ENCODE measurements at regions of chr12 and their contacts with region 1.

Region 1: GRCh38 chr12:46124848-46125619 is 134.7 kb upstream of the SCAF11 start:
- DNase-seq: peak; percentile 70
- H3K4me3 Mint-ChIP-seq: peak overlapping the region; percentile 10
- H3K27ac Mint-ChIP-seq: no peak overlapping the region
- H3K4me1 Mint-ChIP-seq: no peaks in the 10 kb centered on the region
- H3K27me3 Mint-ChIP-seq: no peaks in the 10 kb centered on the region

Region 2: GRCh38 chr12:46303039-46303666 is 178.1 kb after region 1 on chr12:
- CTCF ChIA-PET with region 1: interaction called, 48 read pairs
- intact Hi-C with region 1: loop called (anchors 1 kb)
- DNase-seq: peak; percentile 66
- H3K4me3 Mint-ChIP-seq: no peak overlapping the region
- H3K27ac Mint-ChIP-seq: no peak overlapping the region
- H3K4me1 Mint-ChIP-seq: peaks cover 8% of the 10 kb centered on the region
- H3K27me3 Mint-ChIP-seq: no peaks in the 10 kb centered on the region

Region 3: DNA sequence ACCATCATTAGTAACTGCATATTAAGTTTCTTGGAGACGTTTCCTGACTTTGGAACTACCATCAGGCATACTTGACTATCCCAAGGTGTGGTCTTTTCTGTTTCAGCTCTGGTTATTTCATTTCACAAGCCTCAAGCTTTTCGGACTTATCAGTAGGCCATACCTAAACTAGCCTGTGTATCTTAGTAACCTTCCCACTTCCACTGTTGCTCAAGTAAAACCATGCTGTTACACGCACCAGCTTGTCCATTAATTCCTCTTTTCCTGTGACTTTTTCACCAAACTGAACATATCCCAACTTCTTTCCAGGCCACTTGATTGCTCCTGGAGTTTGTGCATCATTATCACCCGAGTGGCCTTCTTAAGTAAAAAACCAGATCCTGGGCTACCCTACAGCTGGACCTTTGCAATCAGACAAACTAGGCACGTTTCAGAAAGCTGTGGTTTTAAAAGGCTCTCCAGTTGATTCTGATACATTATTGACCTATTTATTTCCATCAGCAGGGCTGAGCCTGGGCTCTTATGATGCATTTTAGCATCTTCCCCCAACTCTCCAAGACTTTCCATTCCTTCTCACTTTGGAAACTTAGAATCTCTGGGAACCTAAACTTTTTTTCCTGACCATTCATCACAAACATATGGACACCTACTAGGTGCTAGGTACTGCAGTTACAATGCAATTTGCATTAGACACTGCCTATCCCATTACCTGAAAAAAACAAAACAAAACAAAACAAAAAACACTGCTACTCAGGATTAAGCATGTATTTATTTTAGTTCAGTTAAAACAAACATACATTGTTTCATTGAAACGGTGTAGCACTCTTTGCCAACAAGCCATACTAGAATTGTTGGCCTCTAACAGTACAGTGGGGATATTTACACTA is 232.6 kb after region 1 on chr12:
- CTCF ChIA-PET with region 1: interaction called, 11 read pairs
- intact Hi-C with region 1: no loop called
- DNase-seq: no peak
- H3K4me3 Mint-ChIP-seq: no peak overlapping the region
- H3K27ac Mint-ChIP-seq: no peak overlapping the region
- H3K4me1 Mint-ChIP-seq: peaks cover 21% of the 10 kb centered on the region
- H3K27me3 Mint-ChIP-seq: no peaks in the 10 kb centered on the region

Region 4: DNA sequence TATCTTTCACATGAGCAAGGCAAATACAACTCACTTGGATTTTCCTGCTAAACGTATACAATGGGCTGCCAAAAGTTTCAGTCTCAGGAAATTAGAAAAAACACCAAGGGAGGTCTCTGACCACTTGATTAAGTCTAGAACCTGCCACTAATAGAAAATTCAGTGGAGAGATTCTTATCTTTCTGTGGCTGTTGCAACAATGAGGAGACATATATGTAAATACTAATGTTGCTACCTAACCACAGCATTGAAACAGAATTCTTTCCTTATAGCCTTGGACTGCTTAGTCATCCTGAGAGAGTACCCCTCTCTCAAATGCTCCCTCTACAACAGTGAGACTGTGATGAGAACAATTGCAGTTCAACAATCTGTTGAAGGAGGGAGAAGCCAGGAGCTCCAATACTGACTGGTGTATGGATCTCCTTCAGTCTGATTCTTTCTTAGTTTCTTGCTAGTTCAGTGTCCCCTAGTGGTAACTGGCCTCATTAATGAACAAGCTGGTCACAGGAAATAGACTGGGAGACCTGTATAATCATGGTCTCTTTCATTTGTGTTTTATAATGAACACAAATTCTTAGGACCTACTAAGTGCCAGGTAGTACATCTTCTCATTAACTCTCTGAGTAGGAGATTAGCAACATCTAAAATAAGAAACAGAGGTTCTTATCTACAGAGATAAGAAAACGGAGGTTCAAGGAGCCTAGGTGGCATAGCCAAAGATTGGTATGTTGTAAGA is 536.2 kb after region 1 on chr12:
- CTCF ChIA-PET with region 1: interaction called, 7 read pairs
- intact Hi-C with region 1: loop called (anchors 1 kb)
- DNase-seq: peak; percentile 25
- H3K4me3 Mint-ChIP-seq: no peak overlapping the region
- H3K27ac Mint-ChIP-seq: no peak overlapping the region
- H3K4me1 Mint-ChIP-seq: peaks cover 29% of the 10 kb centered on the region
- H3K27me3 Mint-ChIP-seq: no peaks in the 10 kb centered on the region

Region 5: DNA sequence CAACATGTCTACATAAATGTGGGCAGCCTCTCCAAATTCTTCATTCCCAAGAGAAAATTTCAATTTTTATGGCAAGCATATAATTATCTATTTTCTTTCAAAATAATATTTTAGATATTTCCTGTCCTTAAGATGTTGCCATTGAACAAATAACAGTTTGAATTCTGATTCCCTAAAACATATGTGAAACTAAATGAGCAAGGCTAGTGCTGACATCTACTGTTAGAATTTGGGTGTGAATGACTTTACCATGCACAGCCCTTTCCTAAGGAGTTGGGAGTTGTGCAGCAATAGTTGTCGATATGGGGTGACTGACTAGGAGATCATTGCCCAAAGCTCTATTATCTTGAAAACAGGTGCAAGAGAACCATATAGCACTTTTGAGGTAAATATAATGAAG is 808.9 kb after region 1 on chr12:
- CTCF ChIA-PET with region 1: interaction called, 5 read pairs
- intact Hi-C with region 1: loop called (anchors 5 kb)
- DNase-seq: no peak
- H3K4me3 Mint-ChIP-seq: no peak overlapping the region
- H3K27ac Mint-ChIP-seq: no peak overlapping the region
- H3K4me1 Mint-ChIP-seq: no peaks in the 10 kb centered on the region
- H3K27me3 Mint-ChIP-seq: peaks cover 8% of the 10 kb centered on the region

Region 6: GRCh38 chr12:47021298-47021697 is 896.3 kb after region 1 on chr12:
- CTCF ChIA-PET with region 1: interaction called, 25 read pairs
- intact Hi-C with region 1: loop called (anchors 1 kb)
- DNase-seq: no peak
- H3K4me3 Mint-ChIP-seq: no peak overlapping the region
- H3K27ac Mint-ChIP-seq: no peak overlapping the region
- H3K4me1 Mint-ChIP-seq: no peaks in the 10 kb centered on the region
- H3K27me3 Mint-ChIP-seq: no peaks in the 10 kb centered on the region